IMR-90 (cell line): ENCODE measurements at regions of chr21 and their contacts with region 1.

Region 1: GRCh38 chr21:32770871-32771523 is 558 bp downstream of the PAXBP1 start:
- DNase-seq: peak; percentile 56
- ATAC-seq: peak; percentile 64
- H3K4me3 ChIP-seq: peak overlapping the region; percentile 98
- H3K27ac ChIP-seq: peak overlapping the region; percentile 88
- H3K4me1 ChIP-seq: no peaks in the 10 kb centered on the region
- H3K27me3 ChIP-seq: no peaks in the 10 kb centered on the region
- CTCF ChIP-seq: no peak
- POLR2A ChIP-seq: no peak
- RAD21 ChIP-seq: no peak

Region 2: DNA sequence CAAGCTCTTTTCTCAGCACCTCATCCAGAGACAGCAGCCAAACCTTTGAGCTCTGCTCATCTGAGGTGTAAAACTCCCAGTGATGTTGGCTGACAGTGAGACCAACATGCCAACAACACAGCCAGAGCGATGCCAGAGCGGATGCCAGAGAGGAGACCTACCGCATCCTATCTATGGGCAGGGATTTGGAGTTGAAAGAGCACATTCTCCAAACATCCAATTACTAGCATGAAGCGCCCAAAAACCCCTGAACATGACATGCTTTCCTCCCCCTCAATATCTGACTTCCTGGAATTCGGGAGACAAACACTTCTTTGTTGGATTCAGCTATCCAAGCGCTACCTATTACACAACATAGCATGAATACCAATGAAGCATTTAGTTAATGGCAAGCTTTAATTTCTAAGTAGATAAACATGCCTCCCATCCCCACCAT is 23.7 kb after region 1 on chr21:
- CTCF ChIA-PET with region 1: interaction called, 11 read pairs
- POLR2A ChIA-PET with region 1: no interaction called
- dilution Hi-C with region 1: no loop called
- in situ Hi-C with region 1: no loop called
- intact Hi-C with region 1: no loop called
- DNase-seq: no peak
- ATAC-seq: peak; percentile 32; the same call in 1 of the 2 replicates
- H3K4me3 ChIP-seq: no peak overlapping the region
- H3K27ac ChIP-seq: no peak overlapping the region
- H3K4me1 ChIP-seq: peaks cover 2% of the 10 kb centered on the region; the same call in 1 of the 2 replicates
- H3K27me3 ChIP-seq: peaks cover 16% of the 10 kb centered on the region; the same call in 1 of the 2 replicates
- CTCF ChIP-seq: no peak
- POLR2A ChIP-seq: no peak
- RAD21 ChIP-seq: no peak